ENCODE measurements at regions of chr12 and their contacts with region 1.

Region 1: DNA sequence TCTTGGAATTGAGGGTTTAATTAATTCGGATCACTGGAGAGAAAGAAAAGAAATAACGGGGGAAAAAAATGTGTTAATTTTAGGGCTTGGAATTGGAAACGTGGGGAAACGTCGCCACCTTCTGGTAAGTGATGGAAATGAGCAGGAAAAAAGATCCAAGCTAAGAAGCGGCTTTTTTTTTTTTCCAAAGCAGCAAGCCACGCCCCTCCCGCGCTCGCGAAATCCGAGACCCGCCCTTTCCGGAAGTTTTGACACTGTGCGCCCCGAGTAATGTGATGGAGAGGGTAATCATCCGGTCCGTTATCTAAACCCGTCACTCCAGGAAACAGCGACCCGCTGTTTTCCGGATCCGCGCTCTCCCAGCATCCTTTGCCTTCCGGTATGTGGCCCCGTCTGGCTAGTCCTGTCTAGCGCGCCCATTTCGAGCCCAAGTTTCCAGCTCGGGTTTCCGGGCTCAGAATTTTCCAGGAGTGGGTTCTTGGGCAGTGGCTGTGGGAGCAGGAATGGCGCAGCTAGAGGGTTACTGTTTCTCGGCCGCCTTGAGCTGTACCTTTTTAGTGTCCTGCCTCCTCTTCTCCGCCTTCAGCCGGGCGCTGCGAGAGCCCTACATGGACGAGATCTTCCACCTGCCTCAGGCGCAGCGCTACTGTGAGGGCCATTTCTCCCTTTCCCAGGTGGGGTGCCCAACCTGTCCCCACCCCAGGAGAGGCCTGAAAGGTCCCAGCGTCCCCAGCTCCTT is at the start of gene ALG10B:
- DNase-seq: peak; percentile 91 to 93
- H3K4me3 ChIP-seq: peak within 1 kb of the TSS; percentile 41 to 86 (median 47)
- H3K27ac ChIP-seq: peak within 1 kb of the TSS; percentile 68 to 76 (median 74)
- H3K4me1 ChIP-seq: peaks cover 4 to 7% of the 10 kb centered on the region in 2 donors
- H3K27me3 ChIP-seq: no peaks in the 10 kb centered on the region
- CTCF ChIP-seq: peak; percentile 30 to 93 (median 60)
- POLR2A ChIP-seq: no peak
- total RNA-seq, gene ALG10B: 5.7 to 18.8 (median 9.1) TPM

Region 2: GRCh38 chr12:38138225-38139221 is 178.0 kb before region 1 on chr12:
- intact Hi-C with region 1: loop called (anchors 5 kb)
- DNase-seq: peak; percentile 73 to 78
- H3K4me3 ChIP-seq: peak overlapping the region in 2 of 3 donors; percentile 35 to 37
- H3K27ac ChIP-seq: peak overlapping the region in 1 of 3 donors; percentile 61
- H3K4me1 ChIP-seq: peaks cover 4 to 5% of the 10 kb centered on the region in 2 donors
- H3K27me3 ChIP-seq: no peaks in the 10 kb centered on the region
- CTCF ChIP-seq: peak; percentile 92 to 99 (median 96)
- POLR2A ChIP-seq: no peak

Region 3: GRCh38 chr12:38201461-38202276 is 114.9 kb before region 1 on chr12:
- intact Hi-C with region 1: no loop called
- DNase-seq: no peak
- H3K4me3 ChIP-seq: no peak overlapping the region
- H3K27ac ChIP-seq: no peak overlapping the region
- H3K4me1 ChIP-seq: no peaks in the 10 kb centered on the region
- H3K27me3 ChIP-seq: no peaks in the 10 kb centered on the region
- CTCF ChIP-seq: no peak
- POLR2A ChIP-seq: no peak

Region 4: GRCh38 chr12:38625306-38625705 is 308.7 kb after region 1 on chr12:
- intact Hi-C with region 1: no loop called
- DNase-seq: no peak
- H3K4me3 ChIP-seq: no peak overlapping the region
- H3K27ac ChIP-seq: no peak overlapping the region
- H3K4me1 ChIP-seq: no peaks in the 10 kb centered on the region
- H3K27me3 ChIP-seq: no peaks in the 10 kb centered on the region
- CTCF ChIP-seq: no peak
- POLR2A ChIP-seq: no peak